Right ventricle myocardium superior (tissue), 1 donor: ENCODE measurements at regions of chr12 and their contacts with region 1.

Region 1: GRCh38 chr12:10562306-10562933 is 51.0 kb downstream of the MAGOHB start:
- DNase-seq: no peak
- ATAC-seq: no peak

Region 2: DNA sequence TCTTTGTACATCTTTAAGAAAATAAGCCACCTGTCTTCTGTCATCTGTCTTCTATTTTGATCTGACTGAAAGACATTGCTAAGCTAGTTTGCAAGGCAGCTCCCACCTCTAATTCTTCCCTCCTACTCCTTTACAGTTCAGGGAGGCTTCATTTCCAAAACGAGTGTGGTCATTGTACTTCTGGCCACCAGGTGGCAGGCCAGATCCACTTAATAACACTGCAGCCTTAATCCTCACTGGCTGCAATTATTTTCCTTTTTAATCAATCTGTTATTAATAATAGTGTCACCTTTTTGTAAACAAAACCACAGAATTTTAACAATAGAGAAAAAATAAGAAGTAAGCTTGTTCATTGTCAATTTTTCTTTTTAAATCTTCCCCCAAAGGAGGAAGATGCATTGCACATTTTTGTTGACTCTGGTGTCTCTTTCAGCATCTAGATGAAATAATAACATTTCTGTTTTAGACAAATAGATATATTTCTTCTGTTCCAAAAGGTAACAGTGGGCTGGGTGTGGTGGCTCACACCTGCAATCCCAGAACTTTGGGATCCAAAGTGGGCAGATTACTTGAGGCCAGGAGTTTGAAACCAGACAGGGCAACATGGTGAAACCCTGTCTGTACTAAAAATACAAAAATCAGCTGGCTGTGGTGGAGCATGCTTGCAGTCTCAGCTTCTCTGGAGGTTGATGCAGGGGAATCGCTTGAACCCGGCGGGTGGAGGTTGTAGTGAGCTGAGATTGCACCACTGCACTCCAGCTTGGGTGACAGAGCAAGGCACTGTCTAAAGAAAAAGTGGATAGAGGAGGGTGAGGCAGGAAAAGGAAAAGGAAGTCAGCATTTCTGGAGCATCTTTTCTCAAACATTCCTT is 326.4 kb before region 1 on chr12:
- intact Hi-C with region 1: loop called (anchors 2 kb)
- DNase-seq: peak; percentile 52
- ATAC-seq: peak; percentile 87

Region 3: DNA sequence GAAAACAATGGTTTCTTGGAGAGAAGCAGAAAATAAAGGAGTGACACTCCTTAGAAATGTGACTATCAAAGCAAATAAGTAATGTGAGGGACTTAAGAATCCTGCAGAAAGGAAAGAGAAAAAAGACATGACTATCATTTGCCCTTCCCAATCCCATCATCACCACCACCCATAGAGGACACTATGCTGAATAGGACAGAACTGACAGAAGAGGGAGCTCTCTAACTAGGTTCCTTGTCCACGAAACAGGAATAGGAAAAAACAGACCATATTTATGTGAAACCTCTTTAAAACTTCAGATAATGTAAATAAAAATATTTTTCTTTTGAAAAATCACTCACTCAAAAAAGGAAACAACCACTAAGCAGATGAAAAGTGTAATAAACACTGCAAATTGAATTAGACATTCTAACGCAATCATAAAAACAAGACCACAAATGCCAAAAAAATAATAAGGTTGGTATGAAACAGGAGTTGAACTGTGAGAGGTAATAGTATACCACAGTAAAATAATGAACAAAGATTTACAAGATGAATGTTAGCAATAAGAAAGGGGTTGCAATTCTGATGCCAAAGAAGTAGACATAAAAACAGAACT is 230.7 kb before region 1 on chr12:
- intact Hi-C with region 1: loop called (anchors 5 kb)
- DNase-seq: no peak
- ATAC-seq: peak; percentile 80

Region 4: DNA sequence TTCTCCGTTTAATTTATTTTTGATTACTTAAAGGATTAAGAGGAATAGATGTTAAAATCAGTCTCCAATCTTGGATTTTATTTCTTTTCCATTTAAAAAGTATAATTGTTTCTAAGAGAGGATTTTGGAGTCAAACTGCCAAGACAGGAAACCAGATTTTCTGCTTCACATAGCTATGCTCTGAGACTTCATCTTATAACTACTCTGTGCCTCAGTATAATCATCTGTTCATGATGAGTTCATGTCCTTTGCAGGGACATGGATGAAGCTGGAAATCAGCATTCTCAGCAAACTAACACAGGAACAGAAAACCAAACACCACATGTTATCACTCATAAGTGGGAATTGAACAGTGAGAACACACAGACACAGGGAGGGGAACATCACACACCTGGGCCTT is 477.7 kb after region 1 on chr12:
- intact Hi-C with region 1: no loop called
- DNase-seq: no peak
- ATAC-seq: no peak